Activated CD8-positive, alpha-beta T cell treated with anti-CD3 and anti-CD28 coated beads, Interleukin-2, amount 10 ng/mL, durations not matched to agents 7 days and 5 days (primary cell): ENCODE measurements at regions of chr12 and their contacts with region 1.

Region 1: DNA sequence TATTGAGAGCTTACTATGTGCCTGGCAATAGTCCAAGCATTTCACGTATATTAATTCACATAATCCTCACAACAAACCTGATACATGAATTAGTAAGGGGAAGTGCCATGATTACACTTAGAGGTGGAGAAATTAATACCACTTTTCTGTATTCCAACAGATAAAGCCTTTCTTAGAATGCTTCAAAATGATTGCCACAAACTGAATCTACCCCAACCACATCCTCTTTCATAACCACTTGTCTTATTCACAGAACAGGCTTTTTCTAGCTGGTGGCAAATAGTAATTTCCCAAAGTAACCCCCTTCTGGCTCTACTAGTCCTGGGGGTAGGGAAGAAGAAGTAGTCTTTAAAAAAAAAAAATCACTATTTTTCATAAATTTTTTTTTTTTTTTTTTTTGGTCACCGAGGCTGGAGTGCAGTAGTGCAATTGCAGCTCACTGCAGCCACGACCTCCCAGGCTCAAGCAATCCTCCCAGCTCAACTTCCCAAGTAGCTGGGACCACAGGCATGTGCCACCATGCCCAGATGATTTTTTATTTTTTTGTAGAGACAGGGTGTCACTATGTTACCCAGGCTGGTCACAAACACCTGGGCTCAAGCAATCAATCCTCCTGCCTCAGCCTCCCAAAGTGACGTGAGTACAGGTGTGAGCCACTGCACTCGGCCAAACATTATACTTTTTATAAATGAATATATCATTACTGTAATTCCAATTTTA is 59.0 kb upstream of the ARID2 start:
- DNase-seq: peak; percentile 56
- ATAC-seq: peak; percentile 58
- H3K4me3 Mint-ChIP-seq: peak overlapping the region; percentile 23
- H3K27ac Mint-ChIP-seq: peak overlapping the region; percentile 74
- H3K4me1 Mint-ChIP-seq: peaks cover 48% of the 10 kb centered on the region
- H3K27me3 Mint-ChIP-seq: no peaks in the 10 kb centered on the region

Region 2: DNA sequence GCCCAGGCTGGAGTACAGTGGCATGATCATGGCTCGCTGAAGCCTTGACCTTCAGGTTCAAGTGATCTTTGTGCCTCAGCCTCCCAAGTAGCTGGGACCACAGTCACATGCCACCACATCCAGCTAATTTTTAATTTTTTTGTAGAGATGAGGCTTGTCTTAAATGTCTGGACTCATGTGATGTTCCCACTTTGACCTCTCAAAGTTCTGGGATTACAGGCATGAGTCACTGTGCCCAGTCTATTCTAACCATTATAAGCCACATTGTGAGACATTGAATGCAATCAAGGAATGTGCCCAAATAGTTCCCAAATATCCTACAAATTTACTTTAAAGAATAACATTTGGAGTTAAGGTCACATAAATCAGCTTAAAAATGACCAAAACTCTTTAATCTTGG is 71.7 kb before region 1 on chr12:
- CTCF ChIA-PET with region 1: no interaction called
- POLR2A ChIA-PET with region 1: no interaction called
- DNase-seq: no peak
- ATAC-seq: no peak
- H3K4me3 Mint-ChIP-seq: no peak overlapping the region
- H3K27ac Mint-ChIP-seq: no peak overlapping the region
- H3K4me1 Mint-ChIP-seq: no peaks in the 10 kb centered on the region
- H3K27me3 Mint-ChIP-seq: peaks cover 9% of the 10 kb centered on the region

Region 3: GRCh38 chr12:45655201-45655600 is 15.3 kb before region 1 on chr12:
- CTCF ChIA-PET with region 1: interaction called, 27 read pairs
- POLR2A ChIA-PET with region 1: interaction called, 5 read pairs
- DNase-seq: peak; percentile 80
- ATAC-seq: peak; percentile 100
- H3K4me3 Mint-ChIP-seq: no peak overlapping the region
- H3K27ac Mint-ChIP-seq: no peak overlapping the region
- H3K4me1 Mint-ChIP-seq: peaks cover 14% of the 10 kb centered on the region
- H3K27me3 Mint-ChIP-seq: peaks cover 4% of the 10 kb centered on the region

Region 4: GRCh38 chr12:45743247-45743646 is 72.7 kb after region 1 on chr12:
- CTCF ChIA-PET with region 1: no interaction called
- POLR2A ChIA-PET with region 1: no interaction called
- DNase-seq: no peak
- ATAC-seq: peak; percentile 53
- H3K4me3 Mint-ChIP-seq: no peak overlapping the region
- H3K27ac Mint-ChIP-seq: no peak overlapping the region
- H3K4me1 Mint-ChIP-seq: peaks cover 21% of the 10 kb centered on the region
- H3K27me3 Mint-ChIP-seq: no peaks in the 10 kb centered on the region

Region 5: GRCh38 chr12:46089407-46090157 is 419.1 kb after region 1 on chr12:
- CTCF ChIA-PET with region 1: no interaction called
- POLR2A ChIA-PET with region 1: no interaction called
- DNase-seq: no peak
- ATAC-seq: no peak
- H3K4me3 Mint-ChIP-seq: no peak overlapping the region
- H3K27ac Mint-ChIP-seq: no peak overlapping the region
- H3K4me1 Mint-ChIP-seq: no peaks in the 10 kb centered on the region
- H3K27me3 Mint-ChIP-seq: peaks cover 7% of the 10 kb centered on the region